ENCODE measurements at regions of chr13 and their contacts with region 1.

Region 1: DNA sequence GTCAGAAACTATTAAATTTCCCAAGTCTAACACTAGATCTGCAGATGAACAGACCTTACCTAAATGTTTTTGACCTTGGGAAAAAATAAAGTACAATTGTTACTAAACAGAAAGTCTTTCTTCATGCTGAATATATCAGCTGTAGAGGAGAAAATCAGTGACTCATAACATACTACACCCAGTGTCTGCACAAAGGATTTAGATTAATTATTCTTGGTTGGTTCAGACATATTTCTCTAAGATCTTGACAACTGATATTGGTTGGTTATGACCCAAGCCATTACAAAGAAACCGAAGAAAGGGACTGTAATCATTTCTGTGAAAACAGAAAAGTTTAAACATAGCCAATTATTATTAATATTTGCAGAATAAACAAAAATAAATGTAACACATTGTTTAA is 225.1 kb downstream of the HS6ST3 start:
- DNase-seq: peak; percentile 0
- H3K4me3 ChIP-seq: no peak overlapping the region
- H3K27ac ChIP-seq: no peak overlapping the region
- H3K4me1 ChIP-seq: no peaks in the 10 kb centered on the region
- H3K27me3 ChIP-seq: no peaks in the 10 kb centered on the region
- CTCF ChIP-seq: no peak

Region 2: DNA sequence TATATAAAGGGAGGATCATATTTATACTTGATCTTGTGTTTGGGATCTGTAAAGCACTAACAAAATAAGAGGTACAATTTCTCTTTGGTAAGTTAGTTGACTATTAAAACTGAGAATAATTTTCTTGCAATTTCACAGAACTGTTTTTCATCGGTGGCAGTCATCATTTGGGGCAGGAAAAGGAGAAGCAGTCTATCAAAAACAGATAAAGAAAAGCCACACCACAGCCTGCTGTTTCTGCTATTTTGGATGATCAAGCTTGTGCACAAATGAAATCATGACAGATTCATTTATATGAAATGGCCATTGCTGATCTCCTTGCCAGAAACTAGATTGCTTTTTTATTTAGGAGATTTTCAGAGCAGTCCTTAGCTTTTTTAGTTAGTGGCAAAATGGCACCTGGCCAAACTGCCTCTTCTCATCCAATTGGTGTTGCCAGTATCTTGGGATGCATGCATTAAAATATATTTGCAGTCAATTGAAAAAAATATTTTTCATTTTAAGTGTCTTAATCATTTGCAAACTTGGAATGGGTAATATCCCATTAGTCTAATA is 100.9 kb after region 1 on chr13:
- CTCF ChIA-PET with region 1: no interaction called
- dilution Hi-C with region 1: loop called (anchors 5 kb)
- in situ Hi-C with region 1: no loop called
- intact Hi-C with region 1: no loop called
- DNase-seq: no peak
- H3K4me3 ChIP-seq: no peak overlapping the region
- H3K27ac ChIP-seq: no peak overlapping the region
- H3K4me1 ChIP-seq: no peaks in the 10 kb centered on the region
- H3K27me3 ChIP-seq: no peaks in the 10 kb centered on the region
- CTCF ChIP-seq: no peak

Measured in mammary epithelial cell (primary cell).